Naive thymus-derived CD4-positive, alpha-beta T cell (primary cell): ENCODE measurements at regions of chr4 and their contacts with region 1.

Region 1: GRCh38 chr4:121192480-121192879 is 28.4 kb upstream of the TNIP3 start:
- DNase-seq: peak in 5 of 9 donors; percentile 31 to 56 (median 50)
- ATAC-seq: peak; percentile 51
- H3K4me3 ChIP-seq: no peak overlapping the region
- H3K4me3 Mint-ChIP-seq: peak overlapping the region; percentile 22 to 88 (median 79)
- H3K27ac ChIP-seq: peak overlapping the region; percentile 18
- H3K27ac Mint-ChIP-seq: peak overlapping the region; percentile 62 to 92 (median 81)
- H3K4me1 ChIP-seq: peaks cover 32 to 50% of the 10 kb centered on the region in 2 donors
- H3K4me1 Mint-ChIP-seq: peaks cover 22 to 57% (median 52%) of the 10 kb centered on the region in 7 donors
- H3K27me3 ChIP-seq: no peaks in the 10 kb centered on the region
- H3K27me3 Mint-ChIP-seq: no peaks in the 10 kb centered on the region

Region 2: GRCh38 chr4:119628308-119629141 is 1564.0 kb before region 1 on chr4 and contains the start of gene PDE5A:
- CTCF ChIA-PET with region 1: no interaction called
- POLR2A ChIA-PET with region 1: no interaction called
- intact Hi-C with region 1: loop called in 1 of 2 experiments (anchors 10 kb)
- DNase-seq: peak; percentile 51 to 81 (median 71)
- ATAC-seq: peak; percentile 88
- H3K4me3 ChIP-seq: peak within 1 kb of the TSS; percentile 70
- H3K4me3 Mint-ChIP-seq: peak within 1 kb of the TSS; percentile 91 to 97 (median 94)
- H3K27ac ChIP-seq: peak within 1 kb of the TSS; percentile 45
- H3K27ac Mint-ChIP-seq: peak within 1 kb of the TSS; percentile 4 to 94 (median 71)
- H3K4me1 ChIP-seq: peaks cover 6 to 7% of the 10 kb centered on the region in 2 donors
- H3K4me1 Mint-ChIP-seq: peaks cover 7 to 27% (median 23%) of the 10 kb centered on the region in 7 donors
- H3K27me3 ChIP-seq: no peaks in the 10 kb centered on the region
- H3K27me3 Mint-ChIP-seq: peaks cover 5 to 73% (median 11%) of the 10 kb centered on the region in 5 donors
- total RNA-seq, gene PDE5A: 0.21 to 1.5 (median 0.65) TPM

Region 3: DNA sequence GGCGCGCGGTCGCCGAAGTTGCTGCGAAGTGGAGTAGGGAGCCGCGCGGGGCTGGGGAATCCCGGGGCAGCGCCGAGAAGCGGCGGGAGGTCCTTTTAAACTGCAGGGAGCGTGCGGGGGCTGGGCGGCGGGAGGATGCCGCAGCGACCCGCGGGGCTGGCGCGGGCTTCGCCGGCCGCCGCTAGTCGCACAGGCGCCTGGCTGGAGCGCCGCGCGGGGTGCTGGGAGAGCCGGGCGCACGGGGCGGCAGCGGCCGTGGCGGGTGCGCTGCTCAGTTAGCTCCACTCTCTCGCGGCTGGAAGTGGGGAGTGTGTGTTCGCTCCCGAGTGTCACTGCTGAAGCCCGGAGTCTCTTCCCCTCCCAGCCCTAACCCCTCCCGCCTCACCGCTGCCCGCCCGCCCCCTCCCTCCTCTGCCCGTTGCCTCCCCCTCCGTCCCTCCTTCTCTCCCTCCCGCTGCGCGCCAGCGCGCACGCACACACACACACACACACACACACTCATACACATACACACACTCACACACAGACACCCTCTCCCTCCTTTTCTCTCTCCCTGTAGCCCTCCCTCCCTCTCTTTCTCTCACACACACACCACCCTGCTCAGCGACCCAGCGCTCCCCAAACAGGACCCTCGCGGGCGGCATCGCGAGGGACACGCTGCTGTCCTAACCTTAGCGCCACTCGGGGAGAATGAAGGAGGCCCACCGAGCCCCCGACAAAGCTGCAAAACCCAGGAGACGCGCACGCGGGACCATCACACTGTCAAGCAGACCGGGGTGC is 120.1 kb before region 1 on chr4 and contains the start of gene NDNF:
- CTCF ChIA-PET with region 1: no interaction called
- POLR2A ChIA-PET with region 1: no interaction called
- intact Hi-C with region 1: loop called in 1 of 2 experiments (anchors 5 kb)
- DNase-seq: peak; percentile 13 to 76 (median 33)
- ATAC-seq: peak; percentile 71
- H3K4me3 ChIP-seq: peak within 1 kb of the TSS; percentile 64
- H3K4me3 Mint-ChIP-seq: peak within 1 kb of the TSS; percentile 83 to 95 (median 90)
- H3K27ac ChIP-seq: no peak within 1 kb of the TSS
- H3K27ac Mint-ChIP-seq: peak within 1 kb of the TSS in 5 of 9 donors; percentile 8 to 65 (median 51)
- H3K4me1 ChIP-seq: peaks cover 0 to 6% of the 10 kb centered on the region in 2 donors
- H3K4me1 Mint-ChIP-seq: peaks cover 20 to 37% (median 23%) of the 10 kb centered on the region in 7 donors
- H3K27me3 ChIP-seq: peaks cover 10% of the 10 kb centered on the region in 2 donors
- H3K27me3 Mint-ChIP-seq: peaks cover 45 to 75% (median 60%) of the 10 kb centered on the region in 5 donors
- total RNA-seq, gene NDNF: not detected

Region 4: GRCh38 chr4:121151942-121152341 is 40.5 kb before region 1 on chr4:
- CTCF ChIA-PET with region 1: interaction called, 14 read pairs
- POLR2A ChIA-PET with region 1: interaction called, 63 read pairs
- intact Hi-C with region 1: loop called (anchors 1 kb)
- DNase-seq: no peak
- ATAC-seq: no peak
- H3K4me3 ChIP-seq: no peak overlapping the region
- H3K4me3 Mint-ChIP-seq: no peak overlapping the region
- H3K27ac ChIP-seq: no peak overlapping the region
- H3K27ac Mint-ChIP-seq: peak overlapping the region in 8 of 9 donors; percentile 43 to 82 (median 66)
- H3K4me1 ChIP-seq: peaks cover 40 to 58% of the 10 kb centered on the region in 2 donors
- H3K4me1 Mint-ChIP-seq: peaks cover 24 to 95% (median 86%) of the 10 kb centered on the region in 7 donors
- H3K27me3 ChIP-seq: no peaks in the 10 kb centered on the region
- H3K27me3 Mint-ChIP-seq: peaks cover 0 to 8% (median 0%) of the 10 kb centered on the region in 5 donors

Region 5: GRCh38 chr4:121227341-121227792 is 34.9 kb after region 1 on chr4:
- CTCF ChIA-PET with region 1: interaction called, 8 read pairs
- POLR2A ChIA-PET with region 1: no interaction called
- intact Hi-C with region 1: loop called (anchors 1 to 2 kb)
- DNase-seq: peak in 3 of 9 donors; percentile 26 to 40 (median 28)
- ATAC-seq: peak; percentile 76
- H3K4me3 ChIP-seq: peak overlapping the region; percentile 34
- H3K4me3 Mint-ChIP-seq: peak overlapping the region in 9 of 10 donors; percentile 52 to 83 (median 69)
- H3K27ac ChIP-seq: peak overlapping the region; percentile 62
- H3K27ac Mint-ChIP-seq: peak overlapping the region; percentile 9 to 91 (median 77)
- H3K4me1 ChIP-seq: peaks cover 7 to 11% of the 10 kb centered on the region in 2 donors
- H3K4me1 Mint-ChIP-seq: peaks cover 12 to 50% (median 30%) of the 10 kb centered on the region in 7 donors
- H3K27me3 ChIP-seq: no peaks in the 10 kb centered on the region
- H3K27me3 Mint-ChIP-seq: no peaks in the 10 kb centered on the region

Region 6: DNA sequence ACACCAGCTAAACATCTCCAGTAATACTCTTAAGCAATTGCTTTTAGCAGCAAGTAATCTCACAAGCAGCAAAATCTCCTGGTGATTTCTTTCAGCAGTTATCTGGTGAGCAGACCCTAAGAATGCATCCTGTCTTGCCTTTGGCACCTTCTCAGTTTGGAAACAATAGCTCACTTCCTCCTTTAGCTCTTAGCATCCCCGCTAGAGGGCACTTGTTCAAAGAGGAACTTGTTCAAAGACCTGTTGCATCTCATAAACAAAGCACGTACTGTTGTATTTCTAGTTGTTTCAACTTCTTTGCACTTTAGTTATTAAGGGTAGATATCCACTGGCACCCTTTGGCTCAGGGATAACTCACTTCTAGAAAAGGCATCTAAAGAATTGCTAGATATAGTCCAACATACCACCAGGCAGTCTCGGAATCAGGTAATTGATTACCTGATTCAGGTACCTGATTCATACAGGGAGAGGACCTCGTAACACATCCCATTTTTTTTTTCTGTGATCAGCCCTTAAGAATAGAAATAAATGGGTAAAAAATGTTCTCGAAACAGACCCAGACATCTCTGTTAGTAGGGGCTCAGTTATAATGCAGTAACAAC is 270.3 kb after region 1 on chr4:
- CTCF ChIA-PET with region 1: no interaction called
- POLR2A ChIA-PET with region 1: no interaction called
- intact Hi-C with region 1: loop called in 1 of 2 experiments (anchors 10 kb)
- DNase-seq: peak in 7 of 9 donors; percentile 15 to 49 (median 37)
- ATAC-seq: peak; percentile 76
- H3K4me3 ChIP-seq: no peak overlapping the region
- H3K4me3 Mint-ChIP-seq: no peak overlapping the region
- H3K27ac ChIP-seq: no peak overlapping the region
- H3K27ac Mint-ChIP-seq: no peak overlapping the region
- H3K4me1 ChIP-seq: no peaks in the 10 kb centered on the region
- H3K4me1 Mint-ChIP-seq: peaks cover 0 to 3% (median 0%) of the 10 kb centered on the region in 7 donors
- H3K27me3 ChIP-seq: no peaks in the 10 kb centered on the region
- H3K27me3 Mint-ChIP-seq: peaks cover 32 to 39% (median 33%) of the 10 kb centered on the region in 5 donors

Region 7: DNA sequence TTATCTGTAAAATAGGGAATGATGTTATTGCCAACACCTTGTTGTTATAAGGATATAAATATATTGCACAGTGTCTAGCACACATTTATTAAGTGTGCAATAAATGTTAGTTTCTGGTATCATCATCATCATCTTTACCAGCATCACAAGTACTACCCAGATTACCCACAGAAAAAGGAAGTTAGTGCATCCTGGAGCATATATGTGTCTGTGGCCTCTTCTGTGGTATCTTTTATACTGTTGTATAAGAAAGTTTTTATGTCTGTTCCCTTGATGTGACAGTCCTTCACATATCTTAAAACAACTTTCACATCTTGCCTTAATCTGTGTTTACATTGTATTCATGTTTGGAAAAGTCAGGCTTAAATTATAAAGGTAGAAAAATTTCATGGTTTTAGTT is 618.6 kb after region 1 on chr4:
- CTCF ChIA-PET with region 1: no interaction called
- POLR2A ChIA-PET with region 1: no interaction called
- intact Hi-C with region 1: no loop called
- DNase-seq: no peak
- ATAC-seq: no peak
- H3K4me3 ChIP-seq: no peak overlapping the region
- H3K4me3 Mint-ChIP-seq: no peak overlapping the region
- H3K27ac ChIP-seq: no peak overlapping the region
- H3K27ac Mint-ChIP-seq: peak overlapping the region in 1 of 9 donors; percentile 48
- H3K4me1 ChIP-seq: no peaks in the 10 kb centered on the region
- H3K4me1 Mint-ChIP-seq: peaks cover 0 to 30% (median 9%) of the 10 kb centered on the region in 7 donors
- H3K27me3 ChIP-seq: no peaks in the 10 kb centered on the region
- H3K27me3 Mint-ChIP-seq: no peaks in the 10 kb centered on the region